Activated CD8-positive, alpha-beta memory T cell treated with anti-CD3 and anti-CD28 coated beads, Interleukin-2, amount 10 ng/mL, durations not matched to agents 7 days and 5 days (primary cell): ENCODE measurements at regions of chr5 and their contacts with region 1.

Region 1: GRCh38 chr5:41903892-41904799 is at the start of gene RIMOC1:
- DNase-seq: peak; percentile 99
- ATAC-seq: peak; percentile 94
- H3K4me3 Mint-ChIP-seq: peak within 1 kb of the TSS; percentile 90
- H3K27ac Mint-ChIP-seq: peak within 1 kb of the TSS; percentile 97
- H3K4me1 Mint-ChIP-seq: peaks cover 54% of the 10 kb centered on the region
- H3K27me3 Mint-ChIP-seq: peaks cover 4% of the 10 kb centered on the region
- total RNA-seq, gene RIMOC1: 21.1 to 27.3 TPM

Region 2: DNA sequence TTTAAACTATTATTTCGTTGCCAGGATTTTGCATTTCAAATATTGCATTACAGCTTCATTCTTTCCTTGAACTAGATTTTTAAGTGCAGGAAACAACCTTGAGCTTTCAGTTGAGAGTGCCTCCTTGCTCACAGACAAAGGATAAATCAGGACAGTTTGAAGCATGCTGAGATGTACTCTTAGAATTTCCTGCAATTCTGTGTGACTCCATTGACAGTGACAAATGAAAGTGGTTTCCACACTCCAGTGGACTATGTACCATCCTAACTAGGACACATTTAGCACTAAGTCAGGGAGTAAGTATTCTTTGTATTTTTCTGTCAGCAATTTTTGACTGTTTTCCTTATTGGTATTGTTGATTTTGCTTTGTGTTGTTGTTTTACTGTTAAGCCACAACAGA is 293.7 kb before region 1 on chr5:
- CTCF ChIA-PET with region 1: no interaction called
- DNase-seq: no peak
- ATAC-seq: no peak
- H3K4me3 Mint-ChIP-seq: no peak overlapping the region
- H3K27ac Mint-ChIP-seq: no peak overlapping the region
- H3K4me1 Mint-ChIP-seq: no peaks in the 10 kb centered on the region
- H3K27me3 Mint-ChIP-seq: no peaks in the 10 kb centered on the region

Region 3: DNA sequence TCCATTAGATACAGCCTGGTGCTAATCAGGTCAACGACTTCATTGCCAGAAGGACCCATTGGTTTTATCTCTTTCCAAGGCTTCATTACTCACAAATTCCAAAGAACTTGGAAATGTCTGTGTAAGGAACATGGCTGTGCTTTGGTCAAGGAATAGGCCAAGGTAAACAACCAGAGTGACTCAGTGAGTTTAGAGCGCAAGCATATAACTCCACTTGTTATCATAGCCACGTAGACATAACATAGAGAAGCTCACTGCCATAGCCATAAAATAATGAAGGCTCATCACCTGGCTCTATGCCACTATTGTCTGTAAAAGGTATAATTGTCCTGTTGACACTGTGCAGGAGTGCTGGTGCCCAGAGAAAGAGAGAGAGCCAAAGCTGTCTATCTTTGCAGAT is 254.5 kb before region 1 on chr5:
- CTCF ChIA-PET with region 1: no interaction called
- DNase-seq: no peak
- ATAC-seq: no peak
- H3K4me3 Mint-ChIP-seq: no peak overlapping the region
- H3K27ac Mint-ChIP-seq: no peak overlapping the region
- H3K4me1 Mint-ChIP-seq: no peaks in the 10 kb centered on the region
- H3K27me3 Mint-ChIP-seq: peaks cover 4% of the 10 kb centered on the region

Region 4: DNA sequence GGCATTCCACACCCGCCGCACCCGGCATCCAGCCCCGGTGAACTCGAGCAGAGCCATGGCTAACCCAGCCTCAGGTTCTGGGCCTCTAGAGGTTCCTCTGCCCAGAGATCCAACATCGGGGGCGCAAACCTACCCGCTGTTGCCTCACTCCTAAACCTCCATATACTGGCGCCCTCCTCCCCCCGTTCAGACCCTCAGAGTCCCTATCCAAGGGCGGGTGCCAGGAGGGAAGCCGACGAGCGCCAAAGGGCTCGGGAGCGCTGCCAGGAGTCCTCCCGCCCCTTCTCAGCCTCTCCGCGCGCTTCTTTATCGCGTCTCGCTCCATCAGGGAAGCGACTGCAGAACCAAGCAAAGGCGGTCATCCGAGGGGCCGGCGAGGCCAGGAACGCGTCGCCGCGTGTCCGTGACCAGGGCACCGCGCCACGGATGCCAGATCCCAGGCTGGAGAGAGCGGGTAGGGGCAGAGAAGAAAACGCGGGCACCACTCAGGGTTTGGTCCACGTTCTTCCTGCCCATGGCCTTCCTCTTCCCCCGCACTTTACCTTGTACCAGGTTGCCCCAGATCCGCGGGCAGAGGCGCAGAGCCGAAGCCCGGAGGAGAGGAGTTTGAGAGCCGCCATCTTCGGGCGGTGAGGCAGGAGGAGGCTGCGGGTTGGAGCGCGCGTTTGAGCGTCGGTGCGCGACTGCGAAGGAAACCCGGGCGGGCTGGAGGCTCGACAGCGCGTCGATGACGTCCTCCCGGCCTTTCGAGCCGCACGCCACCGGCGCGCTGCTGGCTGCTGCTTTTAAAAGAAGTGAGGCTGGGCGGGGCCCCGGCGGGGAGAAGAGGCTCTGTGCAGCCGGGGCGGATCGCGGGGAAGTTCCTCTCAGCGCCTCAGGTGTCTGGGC is 34.2 kb before region 1 on chr5 and contains the start of gene OXCT1:
- CTCF ChIA-PET with region 1: interaction called, 12 read pairs
- DNase-seq: peak; percentile 95
- ATAC-seq: peak; percentile 94
- H3K4me3 Mint-ChIP-seq: peak within 1 kb of the TSS; percentile 89
- H3K27ac Mint-ChIP-seq: peak within 1 kb of the TSS; percentile 89
- H3K4me1 Mint-ChIP-seq: peaks cover 60% of the 10 kb centered on the region
- H3K27me3 Mint-ChIP-seq: no peaks in the 10 kb centered on the region
- total RNA-seq, gene OXCT1: 74.9 to 81.8 TPM